Keratinocyte (primary cell): ENCODE measurements at regions of chr2 and their contacts with region 1.

Region 1: GRCh38 chr2:85707304-85707703 is 13.1 kb downstream of the GNLY start:
- DNase-seq: peak; percentile 61
- H3K4me3 ChIP-seq: no peak overlapping the region
- H3K27ac ChIP-seq: no peak overlapping the region
- H3K4me1 ChIP-seq: peaks cover 18% of the 10 kb centered on the region
- H3K27me3 ChIP-seq: peaks cover 19% of the 10 kb centered on the region
- CTCF ChIP-seq: peak; percentile 78 to 82 (median 82)

Region 2: GRCh38 chr2:85813982-85814801 is 106.9 kb after region 1 on chr2:
- dilution Hi-C with region 1: loop called (anchors 25 kb)
- DNase-seq: peak; percentile 52
- H3K4me3 ChIP-seq: no peak overlapping the region
- H3K27ac ChIP-seq: no peak overlapping the region
- H3K4me1 ChIP-seq: no peaks in the 10 kb centered on the region
- H3K27me3 ChIP-seq: peaks cover 17% of the 10 kb centered on the region
- CTCF ChIP-seq: peak; percentile 96 to 100 (median 96)

Region 3: DNA sequence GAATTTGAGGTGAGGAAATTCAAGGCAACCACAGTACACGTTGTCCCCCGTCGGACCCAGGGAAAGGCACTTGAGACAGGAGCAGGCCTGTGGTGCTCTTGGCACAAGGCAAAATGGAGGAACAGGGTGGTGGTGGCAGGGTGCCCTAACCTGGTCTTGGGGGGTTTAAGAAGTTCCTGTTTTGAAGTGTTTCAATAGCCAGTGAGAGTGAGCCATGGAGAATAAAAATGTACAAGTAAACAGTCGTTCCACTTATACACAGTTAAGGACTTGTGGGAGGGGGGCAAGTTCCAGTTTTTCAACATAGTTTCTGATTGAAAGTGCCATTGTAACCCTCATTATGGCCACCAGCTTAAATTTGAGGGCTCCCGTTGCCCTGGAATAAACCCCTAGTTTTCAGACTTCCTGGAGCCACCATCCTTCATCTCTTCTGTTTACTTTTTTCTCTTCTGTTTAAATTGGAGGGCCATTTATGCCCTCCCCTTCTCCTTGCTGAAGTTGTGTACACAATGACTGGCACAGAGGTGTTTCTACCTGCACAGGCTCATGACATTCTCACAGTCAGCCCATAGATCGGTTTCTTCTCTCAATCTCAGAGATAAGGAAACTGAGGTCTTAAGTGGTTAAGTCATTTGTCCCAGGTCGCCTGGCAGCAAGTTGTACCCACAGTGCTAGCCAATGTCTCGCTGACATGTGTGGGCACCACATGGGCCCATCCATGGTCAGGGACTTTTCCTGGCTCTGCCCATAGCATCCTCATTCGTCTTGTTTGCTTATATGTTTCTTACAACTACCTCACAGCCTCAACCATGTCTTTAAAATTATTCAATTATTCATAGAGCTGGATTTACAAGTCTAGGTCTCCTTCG is 247.5 kb after region 1 on chr2:
- dilution Hi-C with region 1: no loop called
- DNase-seq: no peak
- H3K4me3 ChIP-seq: no peak overlapping the region
- H3K27ac ChIP-seq: no peak overlapping the region
- H3K4me1 ChIP-seq: peaks cover 17% of the 10 kb centered on the region
- H3K27me3 ChIP-seq: no peaks in the 10 kb centered on the region
- CTCF ChIP-seq: no peak